ENCODE measurements at regions of chr1 and their contacts with region 1.

Region 1: GRCh38 chr1:63691701-63692425 is 82.0 kb upstream of the ROR1 start:
- DNase-seq: peak; percentile 77
- H3K4me3 ChIP-seq: no peak overlapping the region
- CTCF ChIP-seq: peak; percentile 67

Region 2: GRCh38 chr1:63624911-63625310 is 67.0 kb before region 1 on chr1:
- CTCF ChIA-PET with region 1: interaction called, 16 read pairs
- POLR2A ChIA-PET with region 1: no interaction called
- DNase-seq: no peak
- H3K4me3 ChIP-seq: no peak overlapping the region
- CTCF ChIP-seq: peak; percentile 15

Region 3: GRCh38 chr1:63653976-63654375 is 37.9 kb before region 1 on chr1:
- CTCF ChIA-PET with region 1: no interaction called
- POLR2A ChIA-PET with region 1: no interaction called
- DNase-seq: no peak
- H3K4me3 ChIP-seq: no peak overlapping the region
- CTCF ChIP-seq: no peak

Region 4: GRCh38 chr1:63721531-63722189 is 29.8 kb after region 1 on chr1:
- CTCF ChIA-PET with region 1: interaction called, 11 read pairs
- POLR2A ChIA-PET with region 1: no interaction called
- DNase-seq: no peak
- H3K4me3 ChIP-seq: no peak overlapping the region
- CTCF ChIP-seq: no peak

Region 5: DNA sequence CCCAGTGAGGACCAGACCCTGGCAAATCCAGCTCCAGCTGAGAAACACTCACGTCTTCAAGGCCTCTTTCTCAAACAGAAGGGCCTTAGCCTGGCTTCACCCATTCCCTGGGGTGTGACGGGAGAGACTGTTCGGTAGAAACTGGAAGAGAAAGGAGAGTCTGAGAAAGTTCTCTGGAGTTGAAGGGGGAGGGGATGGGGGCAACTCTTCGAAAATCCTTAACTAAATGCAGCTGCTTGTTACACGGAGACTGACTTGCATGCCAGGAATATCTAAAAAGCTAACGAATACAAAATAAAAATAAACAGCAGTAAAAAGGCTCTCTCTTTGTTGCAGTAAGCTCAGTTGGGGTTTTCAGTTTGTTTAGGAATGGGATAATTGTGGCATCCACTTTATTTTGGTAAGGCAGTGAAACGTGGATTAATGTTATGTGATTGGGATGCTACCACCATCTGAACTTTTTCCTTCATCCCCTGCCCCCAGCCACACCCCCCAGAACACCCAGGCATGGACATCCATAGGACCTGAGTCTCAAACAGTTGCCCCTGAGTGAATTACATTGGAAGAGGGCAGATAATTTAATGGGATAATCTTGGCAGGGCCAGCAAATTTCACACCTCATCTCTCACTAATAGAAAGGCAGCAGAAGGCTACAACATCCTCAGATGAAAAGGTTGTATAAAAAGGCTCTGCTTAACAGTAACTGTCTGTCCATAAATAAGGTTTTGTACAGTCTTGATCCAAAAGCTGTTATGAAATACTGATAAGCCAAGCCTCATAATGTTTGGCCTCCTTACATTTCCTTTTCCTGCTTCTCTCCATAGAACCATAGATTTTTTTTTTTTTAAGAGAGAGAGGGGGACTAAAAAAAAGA is 87.7 kb after region 1 on chr1:
- CTCF ChIA-PET with region 1: interaction called, 13 read pairs
- POLR2A ChIA-PET with region 1: interaction called, 3 read pairs
- DNase-seq: peak; percentile 34
- H3K4me3 ChIP-seq: no peak overlapping the region
- CTCF ChIP-seq: no peak

Region 6: GRCh38 chr1:63922848-63923247 is 231.0 kb after region 1 on chr1:
- CTCF ChIA-PET with region 1: interaction called, 18 read pairs
- POLR2A ChIA-PET with region 1: no interaction called
- DNase-seq: no peak
- H3K4me3 ChIP-seq: no peak overlapping the region
- CTCF ChIP-seq: no peak

Region 7: DNA sequence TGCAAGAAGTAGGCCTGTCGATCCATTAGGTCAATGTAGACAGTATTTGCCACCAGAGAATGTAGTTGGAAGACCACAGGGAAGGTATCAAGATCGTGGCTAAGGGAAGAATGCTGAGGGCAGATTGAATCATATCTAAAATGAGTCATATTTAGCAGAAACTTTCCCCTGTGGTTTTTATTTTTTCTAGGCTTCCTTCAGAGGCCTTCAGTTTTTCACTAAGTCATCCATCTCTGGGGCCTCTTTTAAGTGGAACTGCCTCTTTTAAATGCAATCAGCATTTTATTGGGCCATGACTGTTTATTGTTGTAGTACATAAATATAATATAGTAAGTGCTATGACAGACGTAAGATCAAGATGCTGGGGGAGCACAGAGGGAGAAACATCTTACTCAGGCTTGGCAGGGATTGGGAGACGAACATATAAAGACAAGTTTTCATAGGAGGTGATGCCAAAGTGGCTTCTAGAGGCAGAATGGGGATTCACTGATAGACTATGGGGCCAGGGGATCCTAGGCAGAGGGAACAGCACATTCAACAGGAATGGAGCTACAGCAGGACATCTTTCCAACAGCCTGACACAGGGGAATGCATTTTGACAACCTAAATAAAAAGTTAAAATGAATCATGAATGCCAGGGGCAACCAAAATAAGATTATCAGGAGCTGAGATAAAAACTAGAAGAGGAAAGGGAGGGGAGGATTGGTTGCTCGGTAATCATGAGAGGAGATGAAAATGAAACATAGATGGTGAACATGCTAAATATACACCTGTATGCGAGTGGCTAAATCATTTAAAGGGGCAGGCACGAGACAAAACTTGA is 531.7 kb after region 1 on chr1:
- CTCF ChIA-PET with region 1: interaction called, 12 read pairs
- POLR2A ChIA-PET with region 1: no interaction called
- DNase-seq: peak; percentile 65
- H3K4me3 ChIP-seq: no peak overlapping the region
- CTCF ChIP-seq: no peak